Activated T-helper 1 cell treated with anti-CD3 and anti-CD28 coated beads, Interleukin-12 subunit alpha, Interleukin-12 subunit beta, Interleukin-2, Interleukin-4 antibody, amounts not matched to agents 30 ng/mL and 10 ng/mL and 1 ng/mL, durations not matched to agents 14 hours and 24 hours and 36 hours (primary cell): ENCODE measurements at regions of chr20 and their contacts with region 1.

Region 1: GRCh38 chr20:38730989-38731737 is 6.9 kb downstream of the SLC32A1 start:
- DNase-seq: peak; percentile 57
- H3K4me3 Mint-ChIP-seq: peak overlapping the region; percentile 61
- H3K27ac Mint-ChIP-seq: peak overlapping the region; percentile 76
- H3K4me1 Mint-ChIP-seq: peaks cover 48% of the 10 kb centered on the region
- H3K27me3 Mint-ChIP-seq: peaks cover 85% of the 10 kb centered on the region

Region 2: GRCh38 chr20:38343311-38344106 is 387.7 kb before region 1 on chr20:
- intact Hi-C with region 1: no loop called
- DNase-seq: no peak
- H3K4me3 Mint-ChIP-seq: no peak overlapping the region
- H3K27ac Mint-ChIP-seq: no peak overlapping the region
- H3K4me1 Mint-ChIP-seq: no peaks in the 10 kb centered on the region
- H3K27me3 Mint-ChIP-seq: peaks cover 2% of the 10 kb centered on the region

Region 3: GRCh38 chr20:38674092-38674764 is 56.9 kb before region 1 on chr20:
- intact Hi-C with region 1: loop called (anchors 5 kb)
- DNase-seq: peak; percentile 38
- H3K4me3 Mint-ChIP-seq: peak overlapping the region; percentile 77
- H3K27ac Mint-ChIP-seq: peak overlapping the region; percentile 74
- H3K4me1 Mint-ChIP-seq: peaks cover 12% of the 10 kb centered on the region
- H3K27me3 Mint-ChIP-seq: peaks cover 35% of the 10 kb centered on the region

Region 4: DNA sequence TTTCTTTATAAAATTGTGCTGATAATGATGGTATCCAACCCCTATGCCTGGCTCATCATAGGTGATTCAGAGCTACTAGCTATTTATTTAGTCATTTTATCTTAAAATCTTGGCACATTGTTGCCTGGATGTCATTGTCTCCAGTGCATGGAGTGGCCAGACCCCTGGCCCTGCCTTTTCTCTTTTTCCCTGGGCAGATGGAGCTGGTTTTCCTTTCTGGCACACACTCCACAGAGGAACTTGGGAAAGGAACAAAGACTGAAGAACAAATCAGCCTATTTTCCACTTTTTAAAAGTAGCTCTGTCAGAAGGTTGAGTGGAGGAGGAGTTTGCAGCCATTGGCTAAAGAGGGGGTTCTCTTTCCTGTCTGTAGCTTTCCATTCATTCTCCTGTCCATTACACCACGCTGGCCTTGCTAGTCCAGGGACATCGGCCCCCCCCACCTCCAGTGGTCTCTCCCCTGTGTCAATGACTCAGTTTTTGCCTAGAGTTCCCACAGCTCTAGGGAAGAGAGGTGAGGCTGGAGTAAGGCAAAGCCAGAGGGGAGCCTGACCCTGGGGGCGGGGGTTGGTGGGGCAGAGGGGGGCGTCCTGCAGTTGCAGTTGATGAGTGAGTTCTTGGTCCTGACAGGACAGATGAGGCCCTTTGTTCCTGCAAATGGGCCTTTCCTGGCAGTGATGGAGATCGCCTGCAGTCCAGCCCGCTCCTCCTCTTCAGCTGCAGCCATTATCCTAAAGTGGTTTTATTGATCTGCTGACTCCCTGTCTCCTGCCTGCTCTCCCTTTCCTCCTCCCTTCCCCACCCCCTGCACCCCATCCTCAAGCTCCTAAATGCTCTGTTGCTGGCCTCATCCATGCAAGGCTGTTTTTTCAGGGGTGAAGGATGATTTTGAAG is 1005.5 kb after region 1 on chr20:
- intact Hi-C with region 1: no loop called
- DNase-seq: no peak
- H3K4me3 Mint-ChIP-seq: no peak overlapping the region
- H3K27ac Mint-ChIP-seq: no peak overlapping the region
- H3K4me1 Mint-ChIP-seq: no peaks in the 10 kb centered on the region
- H3K27me3 Mint-ChIP-seq: no peaks in the 10 kb centered on the region